Activated CD4-positive, alpha-beta memory T cell treated with anti-CD3 and anti-CD28 coated beads, Interleukin-2, amount 10 ng/mL, durations not matched to agents 7 days and 5 days (primary cell): ENCODE measurements at regions of chr14 and their contacts with region 1.

Region 1: GRCh38 chr14:69398053-69398817 is at the starts of genes ERH and SLC39A9:
- DNase-seq: peak; percentile 95
- H3K4me3 Mint-ChIP-seq: peak within 1 kb of the TSS; percentile 92
- H3K27ac Mint-ChIP-seq: peak within 1 kb of the TSS; percentile 93
- H3K4me1 Mint-ChIP-seq: peaks cover 67% of the 10 kb centered on the region
- H3K27me3 Mint-ChIP-seq: no peaks in the 10 kb centered on the region
- total RNA-seq, gene ERH: 281 to 295 TPM
- total RNA-seq, gene SLC39A9: 46.1 to 47.2 TPM

Region 2: GRCh38 chr14:69153131-69153872 is 244.9 kb before region 1 on chr14:
- CTCF ChIA-PET with region 1: interaction called, 3 read pairs
- POLR2A ChIA-PET with region 1: interaction called, 27 read pairs
- DNase-seq: peak; percentile 95
- H3K4me3 Mint-ChIP-seq: peak overlapping the region; percentile 92
- H3K27ac Mint-ChIP-seq: peak overlapping the region; percentile 69
- H3K4me1 Mint-ChIP-seq: peaks cover 32% of the 10 kb centered on the region
- H3K27me3 Mint-ChIP-seq: peaks cover 20% of the 10 kb centered on the region

Region 3: GRCh38 chr14:69363055-69363454 is 35.2 kb before region 1 on chr14:
- CTCF ChIA-PET with region 1: no interaction called
- POLR2A ChIA-PET with region 1: interaction called, 12 read pairs
- DNase-seq: no peak
- H3K4me3 Mint-ChIP-seq: no peak overlapping the region
- H3K27ac Mint-ChIP-seq: no peak overlapping the region
- H3K4me1 Mint-ChIP-seq: peaks cover 6% of the 10 kb centered on the region
- H3K27me3 Mint-ChIP-seq: no peaks in the 10 kb centered on the region

Region 4: DNA sequence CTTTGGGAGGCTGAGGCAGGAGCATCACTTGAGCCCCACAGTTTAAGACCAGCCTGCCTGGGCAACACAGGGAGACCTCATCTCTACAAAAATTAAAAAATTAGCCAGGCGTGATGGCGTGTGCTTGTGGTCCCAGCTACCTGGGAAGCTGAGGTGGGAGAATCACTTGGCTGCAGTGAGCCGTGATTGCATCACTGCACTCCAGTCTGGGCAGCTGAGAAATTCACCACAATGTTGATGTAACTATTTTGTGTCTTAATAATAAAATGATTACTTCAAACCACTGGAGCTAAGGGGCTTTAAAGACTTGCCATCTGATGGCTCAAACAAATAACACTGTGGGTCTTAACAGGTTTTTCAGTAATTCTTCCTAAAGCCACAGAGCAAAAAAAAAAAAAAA is 10.9 kb before region 1 on chr14:
- CTCF ChIA-PET with region 1: interaction called, 4 read pairs
- POLR2A ChIA-PET with region 1: interaction called, 35 read pairs
- DNase-seq: no peak
- H3K4me3 Mint-ChIP-seq: no peak overlapping the region
- H3K27ac Mint-ChIP-seq: no peak overlapping the region
- H3K4me1 Mint-ChIP-seq: peaks cover 44% of the 10 kb centered on the region
- H3K27me3 Mint-ChIP-seq: no peaks in the 10 kb centered on the region

Region 5: GRCh38 chr14:69766984-69767368 is 368.7 kb after region 1 on chr14 and contains the start of gene SRSF5:
- CTCF ChIA-PET with region 1: no interaction called
- POLR2A ChIA-PET with region 1: interaction called, 21 read pairs
- DNase-seq: peak; percentile 95
- H3K4me3 Mint-ChIP-seq: peak within 1 kb of the TSS; percentile 93
- H3K27ac Mint-ChIP-seq: peak within 1 kb of the TSS; percentile 100
- H3K4me1 Mint-ChIP-seq: peaks cover 62% of the 10 kb centered on the region
- H3K27me3 Mint-ChIP-seq: no peaks in the 10 kb centered on the region
- total RNA-seq, gene SRSF5: 368 to 376 TPM